ENCODE measurements at regions of chr9 and their contacts with region 1.

Region 1: DNA sequence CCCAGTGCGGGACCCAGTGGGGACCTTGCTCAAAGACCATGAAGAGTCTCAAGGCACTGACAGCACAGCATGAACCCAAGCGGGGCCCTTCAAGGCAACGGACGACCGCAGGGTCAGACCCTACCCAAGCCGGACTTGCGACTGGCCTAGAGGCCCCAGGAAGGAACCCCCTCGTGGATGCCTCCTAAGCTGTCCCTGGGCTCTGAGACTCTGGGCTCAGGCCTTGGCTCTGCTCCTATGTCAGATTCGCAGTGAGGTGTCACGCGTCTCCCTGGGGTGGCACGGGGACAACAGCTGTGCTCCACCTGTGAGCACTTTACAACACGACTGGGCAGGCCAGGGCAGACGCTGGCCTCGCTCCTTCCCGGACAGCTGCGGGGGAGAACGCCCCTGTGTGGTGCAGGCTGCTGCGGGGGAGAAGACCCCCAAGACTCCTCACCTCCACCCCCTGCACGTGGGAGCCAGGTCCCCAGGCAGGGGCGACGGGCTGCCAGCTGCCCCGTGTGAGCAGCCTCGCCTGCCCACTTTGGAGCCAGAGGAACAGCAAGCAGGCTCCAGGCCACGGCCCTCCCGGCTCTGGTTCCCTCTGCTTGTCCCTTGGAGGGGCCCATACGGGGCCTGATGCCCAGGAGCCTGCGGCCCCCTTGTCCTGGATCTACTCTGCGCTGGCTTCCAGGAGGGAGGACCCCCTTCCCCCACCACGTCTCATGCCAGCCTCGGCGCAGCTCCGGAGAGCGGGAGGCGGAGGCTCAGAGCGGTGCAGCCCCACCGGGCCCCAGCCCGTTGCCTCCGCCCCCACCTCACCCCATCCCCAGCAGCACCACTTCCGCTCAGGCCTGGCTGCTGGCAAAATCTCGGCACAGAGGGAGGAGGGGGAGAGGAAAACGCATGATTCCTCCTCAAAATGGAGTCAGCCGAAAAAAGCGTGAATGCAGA is 36.0 kb downstream of the SARDH start:
- DNase-seq: peak; percentile 85
- H3K4me3 Mint-ChIP-seq: peak overlapping the region; percentile 71
- H3K27ac Mint-ChIP-seq: peak overlapping the region; percentile 83
- H3K4me1 Mint-ChIP-seq: peaks cover 21% of the 10 kb centered on the region
- H3K27me3 Mint-ChIP-seq: peaks cover 15% of the 10 kb centered on the region

Region 2: DNA sequence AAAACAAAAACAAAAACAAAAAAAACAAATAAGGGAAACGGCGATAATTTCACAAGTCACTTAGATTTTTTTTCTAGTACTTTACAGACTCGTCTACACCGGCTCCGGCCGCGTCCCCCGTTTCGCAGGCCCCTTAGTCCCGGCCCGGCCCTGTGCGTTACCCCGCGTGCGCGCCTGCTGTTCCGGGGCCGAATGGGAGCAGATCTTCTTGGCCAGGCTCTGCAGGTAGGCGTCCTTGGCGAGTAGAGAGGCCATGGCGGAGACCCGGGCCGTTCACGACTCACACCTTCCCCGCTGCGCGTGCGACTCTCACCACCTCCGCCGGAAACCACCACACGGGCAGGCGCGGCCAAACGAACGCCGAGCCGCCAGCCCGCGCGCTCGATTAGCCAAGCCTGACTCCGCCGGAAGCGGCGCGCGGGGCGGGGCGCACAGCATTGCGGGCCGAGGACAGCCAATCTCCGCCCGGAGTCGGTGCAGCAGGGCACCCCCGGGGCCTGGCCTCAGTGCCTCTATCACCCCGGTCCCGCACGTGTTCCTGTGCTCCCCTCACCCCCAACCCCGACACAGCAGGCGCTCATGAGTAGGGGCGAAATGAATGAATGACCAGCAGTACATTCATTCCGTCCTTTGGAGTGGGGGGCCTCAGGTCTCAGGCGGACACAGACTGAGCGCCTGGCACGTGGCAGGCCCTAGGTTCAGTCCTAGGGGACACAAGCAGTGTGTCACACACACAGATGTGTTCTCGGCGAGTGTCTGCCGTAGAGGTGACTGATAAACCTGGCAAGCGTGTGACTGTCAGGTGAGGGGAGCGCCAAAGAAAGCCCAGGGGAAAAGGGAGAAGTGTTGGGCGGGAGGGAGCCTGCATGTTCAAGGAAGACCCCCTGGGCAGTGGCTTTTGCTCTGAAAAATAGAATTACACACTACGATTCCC is 366.0 kb before region 1 on chr9 and contains the start of gene SURF6:
- intact Hi-C with region 1: loop called (anchors 5 kb)
- DNase-seq: peak; percentile 99
- H3K4me3 Mint-ChIP-seq: peak within 1 kb of the TSS; percentile 89
- H3K27ac Mint-ChIP-seq: peak within 1 kb of the TSS; percentile 90
- H3K4me1 Mint-ChIP-seq: peaks cover 18% of the 10 kb centered on the region
- H3K27me3 Mint-ChIP-seq: no peaks in the 10 kb centered on the region
- total RNA-seq, gene SURF6: 27.4 and 28.8 TPM in 2 replicates

Region 3: DNA sequence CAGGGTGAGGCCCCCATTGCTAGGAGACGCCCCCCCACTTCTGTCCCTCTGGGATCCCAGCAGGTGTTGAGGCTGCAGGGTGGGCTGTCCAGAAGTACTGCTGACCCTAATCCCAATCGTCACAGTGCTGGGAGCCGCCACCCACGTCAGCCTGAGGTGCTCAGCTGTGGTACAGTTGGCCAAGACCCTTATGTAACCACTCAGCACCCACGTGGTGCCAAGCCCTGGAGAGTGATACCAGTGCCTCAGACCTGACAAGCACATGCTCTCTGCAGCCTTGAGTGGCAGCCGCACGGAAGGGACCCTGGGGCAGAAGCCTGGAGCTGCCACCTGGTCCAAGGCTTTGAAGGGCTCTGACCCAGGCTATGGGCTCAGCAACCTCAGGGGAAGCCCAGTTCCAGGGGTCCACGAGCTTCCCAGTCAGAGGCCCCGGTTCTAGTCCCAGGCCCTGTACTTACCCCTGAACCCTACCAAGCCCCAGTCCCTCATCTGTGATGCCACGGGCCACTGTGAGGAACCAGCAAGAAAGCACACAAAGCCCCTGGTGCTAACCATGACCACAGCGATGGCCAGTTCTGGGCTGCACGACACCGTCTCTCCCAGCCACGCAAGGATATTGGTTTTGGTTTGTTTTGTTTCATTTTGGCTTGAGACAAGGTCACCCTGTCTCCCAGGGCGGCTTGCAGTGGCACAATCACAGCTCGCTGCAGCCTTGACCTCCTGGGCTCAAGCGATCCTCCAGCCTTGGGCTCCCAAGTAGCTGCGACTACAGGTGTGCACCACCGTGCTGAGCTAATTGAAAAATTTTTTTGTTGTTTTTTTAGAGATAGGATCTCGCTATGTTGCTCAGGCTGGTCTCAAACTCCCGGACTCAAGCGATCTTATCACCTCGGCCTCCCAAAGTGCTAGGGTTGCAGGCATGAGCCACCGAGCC is 15.2 kb before region 1 on chr9:
- intact Hi-C with region 1: loop called (anchors 2 kb)
- DNase-seq: no peak
- H3K4me3 Mint-ChIP-seq: no peak overlapping the region
- H3K27ac Mint-ChIP-seq: no peak overlapping the region
- H3K4me1 Mint-ChIP-seq: peaks cover 17% of the 10 kb centered on the region
- H3K27me3 Mint-ChIP-seq: no peaks in the 10 kb centered on the region

Measured in activated CD4-positive, alpha-beta T cell treated with anti-CD3 and anti-CD28 coated beads, Interleukin-2, amount 10 ng/mL, durations not matched to agents 24 days and 14 days (primary cell).